ENCODE measurements at regions of chr14 and their contacts with region 1.

Region 1: GRCh38 chr14:94136575-94137331 is 7.3 kb upstream of the IFI27L2 start:
- DNase-seq: peak; percentile 49 to 93
- H3K4me3 ChIP-seq: no peak overlapping the region
- H3K27ac ChIP-seq: no peak overlapping the region
- H3K4me1 ChIP-seq: no peaks in the 10 kb centered on the region
- H3K27me3 ChIP-seq: no peaks in the 10 kb centered on the region
- CTCF ChIP-seq: peak; percentile 88 to 96 (median 95)

Region 2: DNA sequence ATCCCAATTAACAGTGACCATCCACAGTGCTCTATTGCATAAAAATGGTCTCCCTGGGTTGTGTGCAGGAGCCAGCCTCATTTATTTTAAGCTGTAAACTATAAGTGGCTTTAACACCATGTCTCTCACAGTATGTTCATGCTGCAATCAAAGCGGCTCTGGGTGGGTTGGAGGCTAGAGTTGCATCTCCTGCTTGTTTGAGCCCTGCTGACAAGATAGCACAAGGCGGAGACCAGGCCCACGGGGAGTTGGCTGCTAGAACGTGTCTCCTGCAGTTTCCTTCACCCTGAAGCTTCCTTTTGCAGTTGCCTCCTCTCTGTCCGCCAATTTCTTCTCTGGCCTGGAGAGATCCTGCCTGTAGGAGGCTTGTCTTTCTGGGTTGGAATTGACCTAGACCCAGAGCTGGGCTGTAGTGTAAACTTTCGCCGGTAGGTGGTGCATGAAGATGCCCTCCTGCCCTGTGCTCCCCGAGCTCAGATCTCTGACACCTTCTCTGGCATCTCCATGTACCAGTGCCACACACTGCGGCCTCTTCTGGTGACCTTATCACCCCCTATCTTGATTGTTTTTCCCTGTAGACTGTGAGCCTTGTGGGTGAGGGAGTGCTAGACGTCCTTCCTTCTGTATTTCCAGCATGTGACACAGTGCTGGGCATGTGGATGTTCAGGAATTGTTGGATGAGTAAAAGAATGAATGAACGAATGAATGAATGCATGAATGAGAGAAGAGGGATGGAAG is 100.3 kb before region 1 on chr14:
- intact Hi-C with region 1: loop called (anchors 1 kb)
- DNase-seq: peak in 1 of 2 donors; percentile 78
- H3K4me3 ChIP-seq: no peak overlapping the region
- H3K27ac ChIP-seq: no peak overlapping the region
- H3K4me1 ChIP-seq: no peaks in the 10 kb centered on the region
- H3K27me3 ChIP-seq: no peaks in the 10 kb centered on the region
- CTCF ChIP-seq: peak; percentile 59 to 84 (median 74)

Region 3: DNA sequence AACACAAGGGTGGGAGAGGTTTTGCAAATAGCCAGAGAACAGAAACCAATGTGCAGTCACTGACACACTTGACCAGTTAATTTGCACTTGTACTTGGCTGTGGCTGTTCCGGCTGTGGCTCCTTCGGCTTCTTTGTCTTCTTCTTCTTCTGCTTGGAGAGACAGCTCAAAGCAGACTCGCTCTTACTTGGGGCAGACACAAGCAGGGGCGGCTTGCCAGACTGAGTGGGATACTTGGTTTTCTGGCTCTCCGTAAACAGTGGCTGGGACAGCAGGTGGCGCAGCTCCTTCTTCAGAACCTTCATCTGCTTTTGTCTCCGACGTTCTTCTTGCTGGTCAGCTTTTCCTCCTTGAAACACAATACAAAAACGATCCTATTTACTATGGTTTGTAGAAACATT is 85.6 kb before region 1 on chr14:
- intact Hi-C with region 1: loop called (anchors 5 kb)
- DNase-seq: peak in 1 of 2 donors; percentile 58
- H3K4me3 ChIP-seq: no peak overlapping the region
- H3K27ac ChIP-seq: no peak overlapping the region
- H3K4me1 ChIP-seq: no peaks in the 10 kb centered on the region
- H3K27me3 ChIP-seq: no peaks in the 10 kb centered on the region
- CTCF ChIP-seq: peak in 2 of 3 experiments; percentile 12 to 29

Region 4: GRCh38 chr14:94180655-94181271 is 44.0 kb after region 1 on chr14:
- intact Hi-C with region 1: loop called (anchors 2 kb)
- DNase-seq: no peak
- H3K4me3 ChIP-seq: no peak overlapping the region
- H3K27ac ChIP-seq: no peak overlapping the region
- H3K4me1 ChIP-seq: no peaks in the 10 kb centered on the region
- H3K27me3 ChIP-seq: no peaks in the 10 kb centered on the region
- CTCF ChIP-seq: peak; percentile 29 to 68 (median 58)

Region 5: GRCh38 chr14:94485944-94486841 is 349.4 kb after region 1 on chr14:
- intact Hi-C with region 1: loop called (anchors 10 kb)
- DNase-seq: no peak
- H3K4me3 ChIP-seq: no peak overlapping the region
- H3K27ac ChIP-seq: no peak overlapping the region
- H3K4me1 ChIP-seq: peaks cover 0 to 6% of the 10 kb centered on the region in 2 donors
- H3K27me3 ChIP-seq: no peaks in the 10 kb centered on the region
- CTCF ChIP-seq: peak; percentile 82 to 99 (median 87)

Region 6: DNA sequence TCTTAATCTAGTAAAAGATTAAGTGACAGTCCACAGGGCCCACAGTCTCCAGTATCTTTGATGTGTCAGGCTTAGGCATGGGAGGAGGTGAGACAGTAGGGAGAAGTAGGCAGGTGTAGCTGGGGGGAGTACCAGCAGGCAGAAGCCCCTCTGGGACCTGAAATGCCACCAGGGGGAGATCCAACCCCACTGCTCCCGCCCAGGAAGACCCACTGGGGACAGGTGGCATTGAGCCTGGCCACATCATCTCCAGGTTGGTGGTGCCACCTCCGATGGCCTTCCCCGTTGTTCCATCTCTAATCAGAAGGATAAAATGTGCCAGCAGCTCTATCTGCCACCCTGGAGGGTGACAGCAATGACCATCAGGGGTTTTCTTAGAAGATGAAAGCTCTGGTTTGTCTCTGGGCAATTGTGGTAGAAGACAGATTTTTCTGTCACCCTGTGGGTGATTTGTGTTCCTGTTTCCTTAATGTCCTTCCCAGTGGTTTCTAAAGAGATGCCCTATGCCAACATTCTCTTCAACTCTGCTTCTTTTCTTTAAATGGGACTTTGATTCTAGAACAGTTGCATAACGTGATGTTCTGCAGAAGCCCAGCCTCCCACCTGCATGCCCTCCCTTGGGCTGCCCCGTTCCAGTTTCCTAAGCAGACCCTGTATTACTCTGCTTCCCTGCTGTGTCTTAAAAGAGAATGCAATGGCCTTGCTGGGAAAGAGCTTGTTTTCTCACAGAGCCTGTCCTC is 384.8 kb after region 1 on chr14:
- intact Hi-C with region 1: no loop called
- DNase-seq: no peak
- H3K4me3 ChIP-seq: no peak overlapping the region
- H3K27ac ChIP-seq: no peak overlapping the region
- H3K4me1 ChIP-seq: no peaks in the 10 kb centered on the region
- H3K27me3 ChIP-seq: no peaks in the 10 kb centered on the region
- CTCF ChIP-seq: no peak